ENCODE measurements at regions of chr3 and their contacts with region 1.

Region 1: GRCh38 chr3:134473868-134474546 is 11.8 kb downstream of the ANAPC13 start:
- DNase-seq: peak; percentile 74
- H3K4me3 Mint-ChIP-seq: no peak overlapping the region
- H3K27ac Mint-ChIP-seq: no peak overlapping the region
- H3K4me1 Mint-ChIP-seq: peaks cover 2% of the 10 kb centered on the region
- H3K27me3 Mint-ChIP-seq: no peaks in the 10 kb centered on the region

Region 2: GRCh38 chr3:134197681-134198261 is 276.2 kb before region 1 on chr3:
- CTCF ChIA-PET with region 1: interaction called, 17 read pairs
- POLR2A ChIA-PET with region 1: no interaction called
- DNase-seq: no peak
- H3K4me3 Mint-ChIP-seq: no peak overlapping the region
- H3K27ac Mint-ChIP-seq: no peak overlapping the region
- H3K4me1 Mint-ChIP-seq: peaks cover 2% of the 10 kb centered on the region
- H3K27me3 Mint-ChIP-seq: no peaks in the 10 kb centered on the region

Region 3: DNA sequence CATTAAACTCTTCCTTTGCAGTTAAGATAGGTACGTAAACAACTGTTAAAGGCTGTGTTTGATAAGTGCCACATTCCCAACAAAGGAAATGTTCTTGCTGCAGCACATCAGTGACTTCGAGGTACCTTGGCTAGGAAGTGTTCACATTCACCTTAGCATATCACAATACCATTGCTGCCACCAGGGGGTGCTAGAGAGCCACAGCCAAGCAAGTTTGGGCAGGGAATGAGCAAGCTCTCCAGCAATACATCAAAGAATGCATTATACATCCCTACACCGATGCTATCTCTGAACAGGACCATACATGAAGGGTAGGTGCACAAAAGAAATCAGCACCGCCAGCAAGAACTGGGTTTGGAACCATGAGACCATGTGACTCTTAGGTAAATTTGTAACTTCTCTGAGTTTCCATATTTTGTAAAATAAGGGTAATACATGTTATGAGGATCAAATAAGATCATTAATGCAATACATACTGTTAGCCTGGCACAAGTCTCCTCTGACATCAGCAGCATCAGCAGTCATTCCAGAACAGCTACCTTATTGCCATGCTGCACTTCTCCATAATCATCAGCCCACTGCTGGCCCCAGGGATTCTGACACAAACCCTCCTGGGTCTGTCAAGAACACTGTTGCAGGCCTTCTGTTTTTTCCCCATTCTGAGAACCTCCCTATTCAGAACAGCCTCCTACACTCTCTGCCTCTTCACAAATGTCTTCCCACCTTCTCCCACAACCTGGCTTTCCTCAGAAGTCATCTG is 260.9 kb before region 1 on chr3:
- CTCF ChIA-PET with region 1: interaction called, 19 read pairs
- POLR2A ChIA-PET with region 1: interaction called, 4 read pairs
- DNase-seq: peak; percentile 83
- H3K4me3 Mint-ChIP-seq: no peak overlapping the region
- H3K27ac Mint-ChIP-seq: no peak overlapping the region
- H3K4me1 Mint-ChIP-seq: peaks cover 8% of the 10 kb centered on the region
- H3K27me3 Mint-ChIP-seq: no peaks in the 10 kb centered on the region

Region 4: DNA sequence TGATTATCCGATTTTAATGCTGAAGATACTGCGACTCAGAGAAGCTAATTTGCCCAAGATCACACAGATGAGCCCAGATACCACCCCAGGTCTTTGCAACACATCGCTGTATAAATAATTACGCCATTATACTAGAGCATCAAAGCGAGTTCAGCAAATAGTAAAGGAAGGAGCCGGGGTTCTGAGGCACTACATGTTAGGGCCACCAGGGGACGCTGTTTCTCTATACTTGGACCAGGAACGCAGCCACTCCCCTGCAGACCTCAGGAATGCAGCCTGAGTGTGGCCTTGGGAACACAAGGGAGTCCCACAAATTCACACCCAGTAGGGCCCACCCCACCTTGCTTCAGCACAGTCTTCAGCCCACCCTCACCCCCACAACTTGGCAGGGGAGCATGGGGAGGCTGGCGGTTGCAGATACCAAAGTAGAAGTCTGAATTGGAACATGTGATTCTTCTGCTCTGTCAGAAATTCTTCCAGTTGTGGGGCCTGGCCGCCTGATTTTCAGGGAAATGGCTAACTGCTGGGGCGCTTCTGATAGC is 165.6 kb before region 1 on chr3:
- CTCF ChIA-PET with region 1: interaction called, 56 read pairs
- POLR2A ChIA-PET with region 1: interaction called, 3 read pairs
- DNase-seq: peak; percentile 74
- H3K4me3 Mint-ChIP-seq: no peak overlapping the region
- H3K27ac Mint-ChIP-seq: no peak overlapping the region
- H3K4me1 Mint-ChIP-seq: peaks cover 2% of the 10 kb centered on the region
- H3K27me3 Mint-ChIP-seq: peaks cover 63% of the 10 kb centered on the region

Region 5: DNA sequence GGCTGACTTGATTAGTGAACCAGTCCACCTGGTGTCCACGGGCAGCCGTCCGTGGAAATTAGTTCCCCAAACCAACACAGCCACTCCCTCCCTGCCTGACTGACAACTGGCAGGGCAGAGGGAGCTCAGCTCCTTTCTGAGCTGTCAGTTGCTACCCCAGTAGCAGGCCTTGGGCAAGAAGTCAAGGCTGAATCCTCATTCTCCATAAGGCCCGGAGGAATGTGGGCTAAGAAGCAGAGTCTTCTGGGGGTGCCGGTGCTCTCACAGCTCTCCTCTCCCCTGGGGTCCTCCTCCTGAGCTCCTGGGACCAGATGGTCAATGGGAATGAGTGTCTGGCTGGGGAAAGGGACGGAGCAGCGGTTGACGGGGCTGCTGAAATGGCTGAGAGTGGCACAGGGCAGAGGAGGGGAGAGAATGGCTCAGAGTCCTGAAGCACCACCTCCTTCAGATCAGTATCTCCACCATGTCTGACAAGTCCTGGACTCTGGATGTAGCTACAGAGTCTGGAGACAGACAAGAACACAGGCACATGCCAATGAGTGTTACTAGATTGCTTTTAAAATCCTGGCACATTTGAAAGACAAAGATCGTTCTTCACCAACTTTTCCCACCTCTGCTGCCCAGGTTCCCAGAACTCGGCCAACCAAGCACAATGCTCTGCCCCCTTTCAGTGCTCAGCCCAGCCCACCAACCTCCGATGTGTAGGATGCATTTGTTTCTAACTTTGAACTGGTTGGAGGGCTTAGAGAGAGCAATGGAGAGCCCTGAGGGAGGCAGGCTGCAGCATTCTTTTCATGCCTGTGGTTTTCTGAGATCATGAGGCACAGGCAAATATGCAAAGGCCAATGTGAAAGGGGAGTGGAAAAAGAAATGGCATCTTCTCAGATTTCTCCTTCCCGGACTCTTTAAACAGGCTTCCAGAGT is 116.5 kb before region 1 on chr3:
- CTCF ChIA-PET with region 1: no interaction called
- POLR2A ChIA-PET with region 1: no interaction called
- DNase-seq: no peak
- H3K4me3 Mint-ChIP-seq: no peak overlapping the region
- H3K27ac Mint-ChIP-seq: no peak overlapping the region
- H3K4me1 Mint-ChIP-seq: no peaks in the 10 kb centered on the region
- H3K27me3 Mint-ChIP-seq: peaks cover 2% of the 10 kb centered on the region

Region 6: DNA sequence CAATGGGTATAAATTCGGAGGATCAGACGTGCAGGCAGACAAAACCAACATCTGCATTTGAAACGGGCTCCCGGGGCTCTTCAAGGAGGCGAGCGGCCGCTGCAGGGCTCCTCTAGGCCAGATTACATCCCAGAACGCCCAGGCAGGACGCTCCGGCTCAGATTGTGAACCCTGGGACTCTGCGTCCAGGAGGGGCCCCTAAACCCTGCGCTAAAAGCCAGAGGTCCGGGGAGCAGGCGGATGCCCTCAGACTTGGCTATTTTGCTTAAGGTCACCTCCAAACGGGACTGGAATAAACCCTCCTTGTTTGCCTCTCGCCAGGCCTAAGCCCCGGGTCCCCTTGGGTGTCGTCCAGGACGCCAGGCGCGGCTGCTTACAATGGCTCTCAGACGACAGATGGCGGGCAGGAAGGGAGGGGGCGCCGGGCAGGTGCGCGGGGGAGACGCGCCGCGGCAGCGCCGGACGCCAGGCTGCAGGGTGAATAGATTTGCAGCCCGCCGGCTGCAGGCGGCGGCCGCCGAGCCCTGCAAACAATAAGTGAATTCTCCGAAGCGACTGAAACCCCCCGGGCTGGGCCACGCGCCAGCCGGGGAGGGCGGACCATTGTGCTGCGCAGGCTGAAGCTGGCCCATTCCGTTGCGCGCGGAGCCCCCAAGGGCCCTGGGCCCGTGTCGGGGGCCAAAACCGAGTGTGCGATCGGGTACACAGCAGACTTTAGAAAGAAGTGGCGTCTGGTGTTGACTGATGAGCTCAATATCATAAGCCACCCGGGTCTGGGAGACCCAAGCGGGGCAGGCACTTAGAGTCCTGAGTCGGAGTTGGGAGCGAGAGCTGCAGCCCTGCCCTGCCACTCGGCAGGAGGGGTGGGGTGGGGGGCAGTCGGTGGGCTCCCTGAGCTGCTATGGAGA is 67.4 kb before region 1 on chr3:
- CTCF ChIA-PET with region 1: no interaction called
- POLR2A ChIA-PET with region 1: no interaction called
- DNase-seq: no peak
- H3K4me3 Mint-ChIP-seq: no peak overlapping the region
- H3K27ac Mint-ChIP-seq: no peak overlapping the region
- H3K4me1 Mint-ChIP-seq: no peaks in the 10 kb centered on the region
- H3K27me3 Mint-ChIP-seq: peaks cover 73% of the 10 kb centered on the region

Region 7: GRCh38 chr3:134485718-134486576 is 11.9 kb after region 1 on chr3 and contains the starts of genes ANAPC13 and CEP63:
- CTCF ChIA-PET with region 1: interaction called, 62 read pairs
- POLR2A ChIA-PET with region 1: interaction called, 41 read pairs
- DNase-seq: peak; percentile 94
- H3K4me3 Mint-ChIP-seq: peak within 1 kb of the TSS; percentile 89
- H3K27ac Mint-ChIP-seq: peak within 1 kb of the TSS; percentile 95
- H3K4me1 Mint-ChIP-seq: peaks cover 45% of the 10 kb centered on the region
- H3K27me3 Mint-ChIP-seq: no peaks in the 10 kb centered on the region
- total RNA-seq, gene ANAPC13: 27.3 to 27.4 TPM
- total RNA-seq, gene CEP63: 22.4 to 24.2 TPM